Ovary (tissue), 10 donors: ENCODE measurements at regions of chr10 and their contacts with region 1.

Region 1: DNA sequence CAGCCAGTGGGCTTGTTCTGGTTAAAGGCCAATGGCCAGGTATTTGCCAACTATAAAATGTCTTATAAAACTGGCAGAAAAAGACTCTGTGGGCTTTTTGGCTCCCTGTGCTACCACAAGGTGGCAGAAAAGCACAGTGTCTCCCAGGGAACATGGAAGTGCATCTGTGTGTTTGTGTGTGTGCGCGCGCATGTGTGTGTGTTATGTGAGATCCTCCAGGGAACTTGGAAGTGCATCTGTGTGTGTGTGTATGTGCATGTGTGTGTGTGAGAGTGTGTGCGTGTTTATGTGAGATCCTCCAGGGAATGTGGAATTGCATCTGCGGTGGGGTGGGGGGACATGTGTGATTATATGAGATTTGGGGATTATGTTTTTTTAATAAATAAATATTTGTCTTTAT is 30.2 kb upstream of the ABI1 start:
- DNase-seq: peak in 1 of 5 donors; percentile 40
- H3K4me3 ChIP-seq: no peak overlapping the region
- H3K27ac ChIP-seq: no peak overlapping the region
- H3K4me1 ChIP-seq: no peaks in the 10 kb centered on the region
- H3K27me3 ChIP-seq: no peaks in the 10 kb centered on the region
- CTCF ChIP-seq: no peak
- EP300 ChIP-seq: no peak
- POLR2A ChIP-seq: no peak

Region 2: DNA sequence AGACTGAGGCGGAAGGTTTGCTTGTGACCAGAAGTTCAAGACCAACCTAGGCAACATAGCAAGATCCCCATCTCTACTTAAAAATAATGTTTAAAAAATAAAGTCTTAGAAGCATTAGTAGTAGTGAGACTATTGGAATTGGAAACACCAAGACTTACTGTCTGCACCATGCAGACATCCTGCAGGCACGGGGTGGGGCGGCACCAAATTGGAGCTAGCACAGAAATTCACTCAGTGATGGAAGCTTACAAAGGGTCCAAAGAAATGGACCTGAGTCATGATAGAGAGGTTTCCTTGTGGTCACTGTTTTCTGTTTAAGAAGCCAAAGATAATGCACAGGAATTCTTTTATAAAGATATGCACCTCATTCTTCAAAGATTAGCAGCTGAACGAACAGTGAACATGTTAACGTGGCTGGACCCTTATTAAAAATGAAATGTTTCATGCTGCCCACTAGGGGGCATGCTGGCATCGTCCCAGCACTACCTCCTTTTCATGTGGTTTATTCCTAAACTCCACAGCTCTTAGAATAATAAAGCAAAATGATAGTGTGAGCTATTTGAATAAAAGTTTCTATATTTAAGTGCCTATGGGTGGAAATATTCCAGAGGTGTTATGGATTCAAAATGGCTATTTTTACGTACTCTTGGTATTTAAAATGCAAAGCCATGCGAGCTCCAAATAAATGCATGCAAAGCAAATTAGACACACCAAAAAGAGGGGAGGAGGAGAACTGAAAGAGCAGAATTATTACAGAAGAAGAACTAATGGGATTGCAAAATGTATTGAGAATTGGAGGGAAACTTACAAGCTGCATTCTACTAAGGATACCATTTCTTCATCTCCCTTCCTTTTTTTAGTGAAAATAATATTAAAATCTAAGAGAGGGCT is 164.9 kb before region 1 on chr10:
- intact Hi-C with region 1: loop called in 2 of 4 experiments (anchors 5 to 10 kb)
- DNase-seq: peak; percentile 60 to 84 (median 74)
- H3K4me3 ChIP-seq: no peak overlapping the region
- H3K27ac ChIP-seq: no peak overlapping the region
- H3K4me1 ChIP-seq: no peaks in the 10 kb centered on the region
- H3K27me3 ChIP-seq: no peaks in the 10 kb centered on the region
- CTCF ChIP-seq: peak; percentile 55 to 78 (median 70)
- EP300 ChIP-seq: no peak
- POLR2A ChIP-seq: no peak

Region 3: GRCh38 chr10:27355918-27356573 is 465.1 kb after region 1 on chr10:
- intact Hi-C with region 1: loop called in 1 of 4 experiments (anchors 10 kb)
- DNase-seq: no peak
- H3K4me3 ChIP-seq: no peak overlapping the region
- H3K27ac ChIP-seq: no peak overlapping the region
- H3K4me1 ChIP-seq: no peaks in the 10 kb centered on the region
- H3K27me3 ChIP-seq: no peaks in the 10 kb centered on the region
- CTCF ChIP-seq: no peak
- EP300 ChIP-seq: no peak
- POLR2A ChIP-seq: no peak

Region 4: GRCh38 chr10:27658788-27659187 is 767.8 kb after region 1 on chr10:
- intact Hi-C with region 1: no loop called
- DNase-seq: no peak
- H3K4me3 ChIP-seq: no peak overlapping the region
- H3K27ac ChIP-seq: no peak overlapping the region
- H3K4me1 ChIP-seq: no peaks in the 10 kb centered on the region
- H3K27me3 ChIP-seq: no peaks in the 10 kb centered on the region
- CTCF ChIP-seq: no peak
- EP300 ChIP-seq: no peak
- POLR2A ChIP-seq: no peak